Ovary (tissue), 10 donors: ENCODE measurements at regions of chr6 and their contacts with region 1.

Region 1: DNA sequence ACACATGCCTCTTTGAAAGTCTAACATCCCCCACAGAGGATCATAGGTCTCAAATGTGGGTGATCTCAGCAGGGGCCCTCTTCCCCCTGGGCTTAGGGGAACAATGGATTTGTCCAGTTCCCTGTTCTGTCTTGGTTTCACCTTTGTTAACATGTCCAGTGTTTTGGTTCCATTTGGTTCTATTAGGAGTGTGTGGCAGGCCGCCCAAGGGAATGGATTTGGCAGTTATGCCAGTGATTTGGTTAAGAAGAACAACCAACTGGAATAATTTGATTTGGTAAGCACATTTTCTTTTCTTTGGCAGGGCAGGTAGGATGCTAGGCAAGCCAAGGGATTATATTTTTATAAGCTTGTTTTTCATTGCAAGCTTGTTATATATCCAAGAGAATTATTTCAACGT is 28.5 kb upstream of the ENPP1 start:
- DNase-seq: no peak
- H3K4me3 ChIP-seq: no peak overlapping the region
- H3K27ac ChIP-seq: no peak overlapping the region
- H3K4me1 ChIP-seq: no peaks in the 10 kb centered on the region
- H3K27me3 ChIP-seq: no peaks in the 10 kb centered on the region
- CTCF ChIP-seq: no peak
- EP300 ChIP-seq: no peak
- POLR2A ChIP-seq: no peak

Region 2: DNA sequence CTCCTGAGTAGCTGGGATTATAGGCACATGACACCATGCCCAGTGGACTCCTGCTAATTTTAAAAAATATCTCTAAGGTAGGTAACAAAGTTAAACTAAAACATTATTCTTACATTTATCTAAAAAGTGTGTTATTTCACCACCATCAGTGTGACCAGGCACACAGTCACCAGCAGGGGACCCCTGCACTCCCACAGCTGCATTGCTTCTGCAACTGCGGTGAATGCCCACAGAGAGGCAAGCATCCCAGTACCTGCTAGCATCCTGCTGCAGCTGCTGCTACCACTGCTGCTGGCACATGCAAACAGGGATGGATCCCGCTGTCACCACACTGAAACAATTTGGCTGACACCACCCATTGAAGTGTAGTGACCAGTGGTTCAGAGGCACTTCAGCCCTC is 694.3 kb before region 1 on chr6:
- intact Hi-C with region 1: no loop called
- DNase-seq: no peak
- H3K4me3 ChIP-seq: no peak overlapping the region
- H3K27ac ChIP-seq: no peak overlapping the region
- H3K4me1 ChIP-seq: no peaks in the 10 kb centered on the region
- H3K27me3 ChIP-seq: no peaks in the 10 kb centered on the region
- CTCF ChIP-seq: no peak
- EP300 ChIP-seq: no peak
- POLR2A ChIP-seq: no peak

Region 3: DNA sequence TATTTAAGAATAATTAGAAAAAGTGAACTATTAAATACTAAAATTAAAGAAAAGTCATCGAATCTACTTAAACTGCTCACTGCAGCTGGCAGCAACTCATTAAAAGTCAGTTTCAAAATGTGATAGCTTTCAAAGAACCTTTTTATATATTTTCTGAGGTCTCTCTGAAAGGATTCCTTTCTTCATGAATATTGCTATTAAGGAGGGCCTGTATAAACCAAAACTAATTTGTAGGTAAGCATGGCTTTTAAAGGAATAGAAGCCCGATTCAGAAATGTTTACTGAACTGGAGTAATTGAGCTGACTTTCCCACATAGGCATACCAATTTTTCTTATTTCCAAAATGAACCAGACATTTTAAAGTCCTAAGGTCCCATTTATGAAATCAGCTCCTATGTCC is 12.7 kb before region 1 on chr6:
- intact Hi-C with region 1: loop called in 1 of 4 experiments (anchors 1 kb)
- DNase-seq: no peak
- H3K4me3 ChIP-seq: no peak overlapping the region
- H3K27ac ChIP-seq: no peak overlapping the region
- H3K4me1 ChIP-seq: no peaks in the 10 kb centered on the region
- H3K27me3 ChIP-seq: no peaks in the 10 kb centered on the region
- CTCF ChIP-seq: no peak
- EP300 ChIP-seq: no peak
- POLR2A ChIP-seq: no peak